Aorta (tissue), 5 donors: ENCODE measurements at regions of chr4 and their contacts with region 1.

Region 1: GRCh38 chr4:26081795-26082498 is 167.9 kb downstream of the SMIM20 start:
- DNase-seq: no peak
- ATAC-seq: no peak
- H3K4me3 ChIP-seq: no peak overlapping the region
- H3K27ac ChIP-seq: no peak overlapping the region
- H3K4me1 ChIP-seq: no peaks in the 10 kb centered on the region
- H3K27me3 ChIP-seq: no peaks in the 10 kb centered on the region

Region 2: DNA sequence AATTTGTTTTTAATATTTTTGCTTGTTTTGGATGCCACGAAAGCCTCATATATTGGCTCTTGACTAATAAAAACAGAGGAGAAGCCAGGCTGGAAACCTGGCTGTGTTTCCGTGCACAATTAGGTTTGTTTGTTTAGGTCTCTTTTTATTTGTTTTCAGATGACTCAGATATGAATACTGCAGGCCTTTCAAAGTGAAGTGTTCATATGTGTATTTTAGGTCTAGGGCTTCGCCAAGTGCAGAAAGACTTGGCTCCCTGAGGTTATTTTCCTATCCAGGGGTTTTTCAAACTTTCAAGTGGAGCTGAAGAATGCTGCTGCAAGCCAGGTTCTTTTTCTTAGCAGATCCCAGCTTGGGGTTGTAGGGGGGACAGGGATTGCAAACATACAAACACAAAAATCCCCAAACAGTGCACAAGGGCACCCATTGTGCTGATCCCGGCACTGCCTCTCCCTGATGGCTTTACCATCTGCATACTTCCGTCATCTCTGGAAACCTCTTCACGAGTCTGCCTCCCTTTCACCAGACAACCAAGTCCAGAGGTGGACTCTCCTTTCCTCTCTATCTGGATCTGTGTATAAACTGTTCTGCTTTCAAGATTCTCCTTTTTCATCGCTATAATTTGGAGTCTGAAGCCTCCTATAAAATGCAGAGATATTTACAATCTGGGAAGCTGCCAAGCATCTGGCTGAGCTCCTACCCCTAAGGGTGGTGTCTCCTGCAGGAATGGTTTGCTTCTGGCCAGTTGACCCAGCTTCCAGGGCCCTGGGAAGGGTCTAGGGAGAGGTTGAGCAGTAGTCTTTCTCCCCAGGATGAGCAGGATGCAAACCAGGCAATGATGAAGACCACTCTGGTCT is 59.4 kb before region 1 on chr4:
- intact Hi-C with region 1: loop called in 1 of 2 experiments (anchors 5 kb)
- DNase-seq: peak in 1 of 2 donors; percentile 65
- ATAC-seq: peak; percentile 83
- H3K4me3 ChIP-seq: no peak overlapping the region
- H3K27ac ChIP-seq: peak overlapping the region in 1 of 2 donors; percentile 4
- H3K4me1 ChIP-seq: peaks cover 0 to 5% of the 10 kb centered on the region in 2 donors
- H3K27me3 ChIP-seq: no peaks in the 10 kb centered on the region